Heart left ventricle (tissue), 16 donors: ENCODE measurements at regions of chr6 and their contacts with region 1.

Region 1: GRCh38 chr6:113909234-113909856 is 52.2 kb downstream of the MARCKS start:
- DNase-seq: peak in 1 of 5 donors; percentile 20
- ATAC-seq: no peak
- H3K4me3 ChIP-seq: no peak overlapping the region
- H3K27ac ChIP-seq: no peak overlapping the region
- H3K4me1 ChIP-seq: peaks cover 0 to 9% (median 1%) of the 10 kb centered on the region in 12 donors
- H3K27me3 ChIP-seq: no peaks in the 10 kb centered on the region
- CTCF ChIP-seq: peak; percentile 61 to 87 (median 77)
- POLR2A ChIP-seq: no peak

Region 2: DNA sequence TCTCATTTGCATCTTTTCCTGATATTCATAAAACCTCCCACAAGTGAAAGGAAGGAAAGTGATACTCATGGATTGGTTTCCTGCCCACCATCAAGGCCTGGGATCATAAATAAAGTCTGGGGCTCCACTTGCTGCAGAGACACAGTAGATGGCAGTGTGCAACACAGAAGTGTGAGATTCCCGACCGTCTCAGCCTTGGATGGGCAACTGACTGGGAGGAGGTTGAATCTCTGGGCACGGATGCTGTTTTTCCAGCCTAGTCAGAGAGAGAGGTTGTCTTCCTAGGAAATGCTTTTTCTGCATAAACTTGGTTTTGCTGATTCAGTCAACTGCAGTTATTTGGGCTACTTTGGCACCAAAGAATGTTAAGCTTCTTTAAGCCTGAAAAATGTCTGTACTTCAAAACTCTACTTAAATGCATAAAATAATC is 1572.1 kb before region 1 on chr6:
- intact Hi-C with region 1: loop called in 5 of 10 experiments (anchors 10 kb)
- DNase-seq: peak in 4 of 5 donors; percentile 50 to 62 (median 55)
- ATAC-seq: peak; percentile 78 to 94 (median 92)
- H3K4me3 ChIP-seq: no peak overlapping the region
- H3K27ac ChIP-seq: no peak overlapping the region
- H3K4me1 ChIP-seq: no peaks in the 10 kb centered on the region
- H3K27me3 ChIP-seq: peaks cover 0 to 4% (median 0%) of the 10 kb centered on the region in 9 donors
- CTCF ChIP-seq: peak; percentile 36 to 77 (median 62)
- POLR2A ChIP-seq: no peak

Region 3: DNA sequence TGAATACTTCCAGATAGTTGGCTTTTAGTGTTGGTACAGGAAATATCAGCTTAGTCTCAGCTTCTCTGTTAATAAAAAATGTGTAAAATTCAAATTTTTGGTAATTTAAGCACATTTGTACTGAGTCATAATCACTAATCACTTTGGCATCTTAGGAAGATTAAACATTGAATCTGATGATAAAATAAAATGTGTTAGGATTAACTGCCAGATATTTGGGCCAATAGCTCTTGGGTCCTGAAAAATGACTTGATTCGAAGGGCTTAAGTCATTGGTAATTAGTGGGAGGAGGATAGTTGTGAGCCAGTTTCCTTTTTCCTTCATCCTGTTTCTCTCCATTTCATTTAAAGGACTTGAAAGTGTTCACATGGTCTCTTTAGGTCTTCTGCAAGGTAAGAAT is 1136.2 kb before region 1 on chr6:
- intact Hi-C with region 1: loop called in 1 of 10 experiments (anchors 10 kb)
- DNase-seq: no peak
- ATAC-seq: no peak
- H3K4me3 ChIP-seq: no peak overlapping the region
- H3K27ac ChIP-seq: no peak overlapping the region
- H3K4me1 ChIP-seq: no peaks in the 10 kb centered on the region
- H3K27me3 ChIP-seq: no peaks in the 10 kb centered on the region
- CTCF ChIP-seq: no peak
- POLR2A ChIP-seq: no peak

Region 4: GRCh38 chr6:112780498-112781096 is 1128.7 kb before region 1 on chr6:
- intact Hi-C with region 1: loop called (anchors 1 to 10 kb)
- DNase-seq: peak; percentile 52 to 79 (median 66)
- ATAC-seq: peak in 3 of 4 donors; percentile 86 to 93 (median 91)
- H3K4me3 ChIP-seq: no peak overlapping the region
- H3K27ac ChIP-seq: no peak overlapping the region
- H3K4me1 ChIP-seq: peaks cover 0 to 4% (median 0%) of the 10 kb centered on the region in 12 donors
- H3K27me3 ChIP-seq: no peaks in the 10 kb centered on the region
- CTCF ChIP-seq: peak; percentile 74 to 94 (median 84)
- POLR2A ChIP-seq: no peak

Region 5: GRCh38 chr6:113842153-113842552 is 67.2 kb before region 1 on chr6:
- intact Hi-C with region 1: no loop called
- DNase-seq: no peak
- ATAC-seq: no peak
- H3K4me3 ChIP-seq: no peak overlapping the region
- H3K27ac ChIP-seq: no peak overlapping the region
- H3K4me1 ChIP-seq: no peaks in the 10 kb centered on the region
- H3K27me3 ChIP-seq: no peaks in the 10 kb centered on the region
- CTCF ChIP-seq: no peak
- POLR2A ChIP-seq: no peak

Region 6: DNA sequence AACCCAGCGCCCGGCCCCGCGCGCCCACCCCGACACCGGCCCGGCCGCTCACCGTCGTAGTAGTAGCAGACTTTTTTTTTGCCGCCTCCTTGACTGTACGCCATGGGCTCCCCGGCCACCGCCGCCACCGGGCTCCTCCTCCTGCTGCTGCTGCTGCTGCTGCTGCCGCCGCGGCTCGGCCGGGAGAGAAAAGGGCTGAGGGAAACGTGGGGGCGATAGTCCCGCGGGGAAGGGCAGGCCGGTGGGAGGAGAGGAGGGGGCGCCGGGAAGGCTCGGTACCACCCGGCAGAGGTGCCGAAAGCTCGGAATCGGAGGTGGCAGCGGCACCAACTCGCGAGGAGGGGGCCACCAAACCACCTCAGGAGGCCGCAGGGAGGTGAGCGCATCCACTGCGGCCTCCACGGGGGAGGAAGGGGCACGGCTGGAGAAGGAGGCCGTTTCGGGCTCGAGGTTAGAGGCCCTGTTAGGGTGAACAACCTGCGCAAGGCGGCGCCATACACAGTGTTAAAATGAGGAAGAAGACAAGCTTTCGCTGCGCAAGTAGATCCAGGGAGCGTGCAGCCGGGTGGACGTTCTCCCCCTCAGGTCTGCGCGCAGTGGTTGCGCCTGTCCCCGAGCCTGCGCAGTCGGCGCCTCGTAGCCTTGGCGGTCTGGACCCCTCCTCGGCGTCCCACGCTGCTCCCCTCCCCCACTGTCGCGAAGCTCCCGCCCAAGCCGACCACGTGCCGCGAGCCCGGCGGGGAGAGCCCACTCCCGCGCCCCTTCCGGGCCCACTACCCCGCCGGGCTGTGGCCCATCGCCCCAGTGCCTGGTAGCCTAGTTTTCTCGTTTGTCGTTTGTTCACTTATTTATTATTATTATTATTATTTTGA is 61.7 kb after region 1 on chr6 and contains the start of gene HDAC2:
- intact Hi-C with region 1: no loop called
- DNase-seq: peak; percentile 88 to 95 (median 91)
- ATAC-seq: peak; percentile 94 to 97 (median 95)
- H3K4me3 ChIP-seq: peak within 1 kb of the TSS; percentile 84 to 100 (median 93)
- H3K27ac ChIP-seq: peak within 1 kb of the TSS; percentile 81 to 97 (median 92)
- H3K4me1 ChIP-seq: peaks cover 3 to 44% (median 25%) of the 10 kb centered on the region in 12 donors
- H3K27me3 ChIP-seq: no peaks in the 10 kb centered on the region
- CTCF ChIP-seq: no peak
- POLR2A ChIP-seq: peak in 1 of 2 donors; percentile 45
- total RNA-seq, gene HDAC2: 18.3 to 59.6 (median 48.0) TPM